ENCODE measurements at regions of chr12 and their contacts with region 1.

Region 1: DNA sequence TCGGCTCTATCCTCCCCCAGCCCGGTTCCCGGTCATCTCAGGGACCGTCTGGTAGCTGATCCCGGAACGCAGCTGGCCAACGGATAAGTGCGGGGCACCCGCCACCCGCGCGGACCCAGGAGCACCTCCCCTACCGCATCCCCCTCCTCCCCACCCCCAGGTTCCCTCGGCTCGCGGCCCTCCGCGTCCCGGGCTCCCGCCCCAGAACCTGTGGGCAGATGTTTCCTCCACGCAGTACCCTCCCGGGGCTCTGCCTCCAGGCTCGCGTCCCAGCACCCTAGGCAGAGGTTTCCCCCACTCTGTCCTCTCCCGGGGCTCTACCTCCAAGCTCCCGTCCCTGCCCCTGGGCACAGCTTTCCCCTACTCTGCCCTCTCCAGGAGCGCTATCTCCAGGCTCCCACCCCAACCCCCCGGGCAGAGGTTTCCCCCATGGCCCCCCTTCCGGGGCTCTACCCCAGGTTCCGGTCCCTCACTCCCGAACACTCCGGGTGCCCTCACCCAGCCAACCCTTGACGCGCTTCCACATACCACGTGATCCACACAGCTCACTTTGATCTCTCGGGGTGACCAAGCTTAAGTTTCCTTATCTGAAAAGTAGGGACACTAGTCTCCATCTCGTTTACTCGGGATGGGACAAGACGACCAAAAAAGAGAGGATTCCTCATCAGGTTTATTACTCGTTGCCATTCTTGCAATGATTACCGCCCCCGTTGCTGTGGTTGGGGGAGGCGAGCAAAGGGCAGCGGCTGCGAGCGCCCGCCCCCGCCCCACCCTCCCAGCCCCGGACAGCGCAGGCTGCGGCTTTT is at the start of gene CCDC38:
- DNase-seq: peak; percentile 93 to 99
- ATAC-seq: peak; percentile 95 to 97
- H3K4me3 ChIP-seq: peak within 1 kb of the TSS; percentile 82
- H3K27ac ChIP-seq: peak within 1 kb of the TSS; percentile 96 to 99
- H3K4me1 ChIP-seq: peaks cover 25% of the 10 kb centered on the region
- CTCF ChIP-seq: no peak
- EP300 ChIP-seq: no peak
- POLR2A ChIP-seq: peak; percentile 79
- RAD21 ChIP-seq: no peak; a peak in 1 of 5 replicates
- polyA plus RNA-seq, gene CCDC38: 0.37 and 0.41 TPM in 2 replicates

Region 2: DNA sequence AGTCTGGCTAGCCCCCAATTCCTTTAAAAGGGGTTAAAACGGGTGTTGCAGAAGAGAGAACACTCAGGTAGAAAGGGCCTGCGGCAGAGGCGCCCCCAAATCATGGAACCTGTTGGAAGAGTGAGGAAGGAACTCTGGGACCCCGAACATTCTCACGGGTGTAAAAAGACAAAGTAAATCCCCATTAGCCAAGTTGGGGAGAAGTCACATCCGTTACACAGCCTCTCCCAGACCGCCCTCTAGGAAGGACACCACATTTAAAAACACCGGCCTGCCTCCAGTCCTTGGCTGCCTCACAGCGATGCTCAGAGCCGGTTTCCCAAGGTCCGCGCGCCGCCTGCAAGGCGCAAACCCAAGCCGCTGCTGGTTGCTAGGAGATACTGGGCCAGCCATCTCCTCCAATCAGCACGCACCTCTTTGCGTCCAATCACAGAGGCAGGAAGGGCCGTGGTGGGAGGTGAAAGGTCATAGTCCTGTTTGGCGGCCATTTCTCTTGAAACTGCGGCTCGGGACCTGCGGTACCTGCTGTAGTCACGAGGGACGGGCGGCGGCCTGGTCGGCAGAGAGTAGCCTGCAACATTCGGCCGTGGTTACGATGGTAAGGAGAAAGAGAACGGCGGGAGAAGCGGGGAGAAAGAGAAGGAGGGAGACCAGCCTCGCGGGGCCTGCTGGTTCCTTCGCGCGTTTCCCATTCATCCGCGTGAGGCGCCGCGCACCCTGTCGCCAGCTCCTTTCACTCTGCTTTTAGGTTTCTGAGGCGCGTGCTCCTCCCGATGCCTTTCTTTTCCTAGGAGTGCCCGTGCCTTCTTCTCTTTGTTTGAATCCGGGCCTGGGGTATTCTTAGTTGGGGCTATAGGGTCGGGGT is 84.0 kb before region 1 on chr12 and contains the start of gene SNRPF:
- CTCF ChIA-PET with region 1: no interaction called
- POLR2A ChIA-PET with region 1: interaction called, 11 read pairs
- DNase-seq: peak; percentile 98 to 100
- ATAC-seq: peak; percentile 99
- H3K4me3 ChIP-seq: peak within 1 kb of the TSS; percentile 67
- H3K27ac ChIP-seq: peak within 1 kb of the TSS; percentile 86 to 91
- H3K4me1 ChIP-seq: peaks cover 14% of the 10 kb centered on the region; the same call in 1 of the 3 replicates
- CTCF ChIP-seq: no peak
- EP300 ChIP-seq: no peak
- POLR2A ChIP-seq: peak; percentile 74
- RAD21 ChIP-seq: peak in 1 of 2 experiments; percentile 15; a peak in 1 of 5 replicates
- polyA plus RNA-seq, gene SNRPF: 45.8 and 66.3 TPM in 2 replicates

Region 3: DNA sequence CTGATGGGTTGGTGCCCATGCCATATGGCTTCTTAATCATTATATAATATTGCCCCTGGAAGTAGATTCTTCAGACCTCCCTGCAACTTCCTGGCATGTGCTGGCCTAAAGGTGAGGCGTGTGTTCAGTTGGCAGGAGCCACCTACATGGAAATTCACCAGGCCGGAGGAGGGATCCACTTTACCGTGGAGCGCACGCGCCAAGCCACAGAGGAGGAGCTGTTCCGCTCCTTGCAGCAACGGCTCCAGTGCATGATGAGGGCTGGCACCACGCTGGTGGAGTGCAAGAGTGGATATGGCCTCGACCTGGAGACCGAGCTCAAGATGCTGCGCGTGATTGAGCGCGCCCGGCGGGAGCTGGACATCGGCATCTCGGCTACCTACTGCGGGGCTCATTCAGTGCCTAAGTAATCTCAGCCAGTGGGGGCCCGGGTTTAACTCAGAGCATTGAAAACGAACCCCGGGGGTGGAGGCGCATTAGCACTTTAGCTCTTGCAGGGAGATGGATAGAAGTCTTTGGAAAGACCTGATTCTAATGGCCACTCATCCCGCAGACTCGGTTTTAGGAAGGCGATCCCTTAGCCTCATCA is 13.9 kb after region 1 on chr12:
- CTCF ChIA-PET with region 1: interaction called, 13 read pairs
- POLR2A ChIA-PET with region 1: interaction called, 28 read pairs
- DNase-seq: no peak
- ATAC-seq: no peak
- H3K4me3 ChIP-seq: no peak overlapping the region
- H3K27ac ChIP-seq: no peak overlapping the region
- H3K4me1 ChIP-seq: no peaks in the 10 kb centered on the region
- CTCF ChIP-seq: no peak
- EP300 ChIP-seq: no peak
- POLR2A ChIP-seq: no peak
- RAD21 ChIP-seq: no peak

Region 4: GRCh38 chr12:96015672-96016071 is 72.9 kb after region 1 on chr12:
- CTCF ChIA-PET with region 1: no interaction called
- POLR2A ChIA-PET with region 1: no interaction called
- DNase-seq: peak; percentile 27 to 62
- ATAC-seq: peak; percentile 96 to 97
- H3K4me3 ChIP-seq: no peak overlapping the region
- H3K27ac ChIP-seq: no peak overlapping the region
- H3K4me1 ChIP-seq: no peaks in the 10 kb centered on the region
- CTCF ChIP-seq: peak; percentile 39; the same call in 2 of the 3 replicates
- EP300 ChIP-seq: no peak
- POLR2A ChIP-seq: no peak
- RAD21 ChIP-seq: peak; percentile 35 to 46; a peak in 4 of 5 replicates

Region 5: GRCh38 chr12:96035278-96036236 is 92.8 kb after region 1 on chr12 and contains the start of gene LTA4H:
- CTCF ChIA-PET with region 1: no interaction called
- POLR2A ChIA-PET with region 1: interaction called, 11 read pairs
- DNase-seq: peak; percentile 97 to 99
- ATAC-seq: peak; percentile 91 to 94
- H3K4me3 ChIP-seq: peak within 1 kb of the TSS; percentile 67
- H3K27ac ChIP-seq: peak within 1 kb of the TSS; percentile 78 to 90
- H3K4me1 ChIP-seq: peaks cover 18% of the 10 kb centered on the region
- CTCF ChIP-seq: no peak
- EP300 ChIP-seq: no peak
- POLR2A ChIP-seq: peak; percentile 98
- RAD21 ChIP-seq: no peak; a peak in 1 of 5 replicates
- polyA plus RNA-seq, gene LTA4H: 162 and 174 TPM in 2 replicates